Psoas muscle (tissue), 8 donors: ENCODE measurements at regions of chr3 and their contacts with region 1.

Region 1: DNA sequence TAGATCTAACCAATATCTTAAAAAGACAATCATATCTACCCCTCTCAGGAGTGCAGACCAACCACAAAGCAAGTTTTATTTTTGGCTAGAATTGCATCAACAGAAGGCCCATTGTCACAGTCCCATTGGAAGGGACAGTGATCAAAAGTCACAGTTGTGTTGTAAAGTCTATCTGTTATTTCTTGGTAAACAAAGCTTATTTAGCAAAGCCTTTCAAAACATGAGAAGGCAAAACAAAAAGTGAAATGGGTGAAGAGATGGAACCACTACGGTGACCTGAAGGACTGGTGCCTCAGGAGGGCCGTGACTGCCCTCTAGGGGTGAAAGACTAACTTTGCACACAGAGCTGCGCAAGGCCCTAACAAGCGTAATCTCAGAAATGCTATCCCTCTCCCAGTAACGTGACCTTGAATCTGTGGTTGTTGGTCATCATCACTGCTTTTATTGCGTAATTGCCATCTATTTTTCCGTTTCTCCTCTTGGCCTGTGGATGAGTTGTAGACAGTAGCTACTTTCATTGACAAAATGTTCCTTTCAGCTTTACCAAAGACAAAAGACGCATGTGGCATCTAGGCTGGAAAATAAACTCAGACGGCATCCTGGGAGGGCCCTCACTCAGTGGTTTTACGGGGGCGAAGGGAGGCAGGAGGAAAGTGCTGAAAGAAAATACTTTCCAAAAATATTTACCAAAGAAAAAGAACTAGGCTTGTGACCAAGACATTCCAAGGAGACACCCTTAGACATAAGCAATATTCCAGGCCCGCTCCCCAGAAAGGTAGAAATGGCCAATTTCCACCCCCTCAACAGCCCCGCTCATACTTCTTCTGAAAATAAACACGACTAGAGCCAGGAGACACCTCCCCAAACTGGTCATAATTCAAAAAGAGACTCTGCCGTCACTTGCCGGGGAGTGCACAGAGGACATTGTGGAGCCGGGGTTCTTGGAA is 79.4 kb downstream of the FRMD4B start:
- DNase-seq: peak; percentile 68 to 79
- ATAC-seq: peak; percentile 98 to 100 (median 98)
- H3K4me3 ChIP-seq: no peak overlapping the region
- H3K27ac ChIP-seq: peak overlapping the region; percentile 0
- H3K4me1 ChIP-seq: no peaks in the 10 kb centered on the region
- H3K27me3 ChIP-seq: no peaks in the 10 kb centered on the region
- CTCF ChIP-seq: peak; percentile 96

Region 2: DNA sequence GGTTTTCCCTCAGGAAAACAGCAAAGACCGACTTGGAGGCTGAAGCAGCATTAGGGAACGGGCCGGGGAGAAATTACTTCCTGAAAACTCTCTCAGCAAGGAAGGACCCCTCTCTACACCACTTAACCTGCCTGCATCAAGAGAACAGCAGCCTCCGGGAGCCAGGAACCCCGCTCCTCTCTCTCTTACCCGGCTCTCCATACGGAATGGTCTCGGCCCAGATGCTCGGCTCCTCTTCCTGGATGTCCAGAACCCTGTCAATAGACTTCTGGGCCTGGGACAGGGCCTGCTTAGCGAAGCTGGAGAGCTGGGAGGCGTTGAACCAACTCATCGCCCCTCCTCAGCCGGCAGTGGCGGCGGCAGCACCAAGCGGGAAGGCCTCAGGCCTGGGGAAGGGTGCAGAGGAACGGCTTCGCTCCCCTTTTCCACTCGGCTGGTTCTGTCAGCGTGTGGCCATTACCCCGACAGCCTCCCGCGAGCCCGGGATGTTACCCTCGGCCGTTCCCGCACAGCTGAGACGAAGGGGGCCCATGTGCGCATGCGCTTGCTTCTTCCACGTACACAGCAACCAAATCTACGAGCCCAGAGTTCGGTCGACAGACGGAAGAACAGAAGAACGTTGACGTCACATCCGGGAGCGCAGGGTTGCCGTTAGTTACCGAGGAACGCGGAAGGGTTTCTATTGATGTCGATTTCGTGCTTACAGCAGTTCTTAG is 254.6 kb before region 1 on chr3 and contains the start of gene TMF1:
- intact Hi-C with region 1: loop called in 1 of 2 experiments (anchors 10 kb)
- DNase-seq: peak; percentile 98 to 99
- ATAC-seq: peak; percentile 99
- H3K4me3 ChIP-seq: peak within 1 kb of the TSS; percentile 94
- H3K27ac ChIP-seq: peak within 1 kb of the TSS; percentile 96
- H3K4me1 ChIP-seq: peaks cover 13% of the 10 kb centered on the region
- H3K27me3 ChIP-seq: no peaks in the 10 kb centered on the region
- CTCF ChIP-seq: no peak
- total RNA-seq, gene TMF1: 23.0 to 31.5 (median 29.3) TPM

Region 3: GRCh38 chr3:69120879-69121464 is 185.5 kb before region 1 on chr3:
- intact Hi-C with region 1: loop called in 1 of 2 experiments (anchors 1 kb)
- DNase-seq: peak in 1 of 2 donors; percentile 47
- ATAC-seq: peak; percentile 50 to 64 (median 60)
- H3K4me3 ChIP-seq: peak overlapping the region; percentile 65
- H3K27ac ChIP-seq: peak overlapping the region; percentile 98
- H3K4me1 ChIP-seq: peaks cover 32% of the 10 kb centered on the region
- H3K27me3 ChIP-seq: no peaks in the 10 kb centered on the region
- CTCF ChIP-seq: peak; percentile 94

Region 4: GRCh38 chr3:69161587-69162307 is 144.8 kb before region 1 on chr3:
- intact Hi-C with region 1: loop called (anchors 1 to 5 kb)
- DNase-seq: no peak
- ATAC-seq: peak; percentile 75 to 92 (median 82)
- H3K4me3 ChIP-seq: no peak overlapping the region
- H3K27ac ChIP-seq: no peak overlapping the region
- H3K4me1 ChIP-seq: no peaks in the 10 kb centered on the region
- H3K27me3 ChIP-seq: no peaks in the 10 kb centered on the region
- CTCF ChIP-seq: peak; percentile 95

Region 5: GRCh38 chr3:69410250-69410649 is 103.7 kb after region 1 on chr3:
- intact Hi-C with region 1: loop called in 1 of 2 experiments (anchors 5 kb)
- DNase-seq: peak; percentile 56 to 66
- ATAC-seq: peak; percentile 77 to 92 (median 88)
- H3K4me3 ChIP-seq: peak overlapping the region; percentile 24
- H3K27ac ChIP-seq: no peak overlapping the region
- H3K4me1 ChIP-seq: no peaks in the 10 kb centered on the region
- H3K27me3 ChIP-seq: peaks cover 0 to 2% (median 0%) of the 10 kb centered on the region in 3 donors
- CTCF ChIP-seq: peak; percentile 82

Region 6: GRCh38 chr3:69671082-69671952 is 364.8 kb after region 1 on chr3:
- intact Hi-C with region 1: loop called in 1 of 2 experiments (anchors 5 kb)
- DNase-seq: no peak
- ATAC-seq: peak in 1 of 4 donors; percentile 59
- H3K4me3 ChIP-seq: no peak overlapping the region
- H3K27ac ChIP-seq: no peak overlapping the region
- H3K4me1 ChIP-seq: no peaks in the 10 kb centered on the region
- H3K27me3 ChIP-seq: no peaks in the 10 kb centered on the region
- CTCF ChIP-seq: peak; percentile 74

Region 7: GRCh38 chr3:69739204-69740102 is 432.9 kb after region 1 on chr3 and contains the start of gene MITF:
- intact Hi-C with region 1: no loop called
- DNase-seq: peak; percentile 94 to 96
- ATAC-seq: peak; percentile 91 to 94 (median 92)
- H3K4me3 ChIP-seq: peak within 1 kb of the TSS; percentile 94
- H3K27ac ChIP-seq: peak within 1 kb of the TSS; percentile 93
- H3K4me1 ChIP-seq: peaks cover 41% of the 10 kb centered on the region
- H3K27me3 ChIP-seq: no peaks in the 10 kb centered on the region
- CTCF ChIP-seq: no peak
- total RNA-seq, gene MITF: 48.2 to 98.1 (median 62.8) TPM